Posterior vena cava (tissue), 2 donors: ENCODE measurements at regions of chr12 and their contacts with region 1.

Region 1: GRCh38 chr12:99767809-99768208 is 120.3 kb downstream of the GARIN6 start:
- DNase-seq: no peak

Region 2: GRCh38 chr12:99043319-99043914 is 724.4 kb before region 1 on chr12:
- intact Hi-C with region 1: loop called (anchors 10 kb)
- DNase-seq: peak; percentile 85

Region 3: DNA sequence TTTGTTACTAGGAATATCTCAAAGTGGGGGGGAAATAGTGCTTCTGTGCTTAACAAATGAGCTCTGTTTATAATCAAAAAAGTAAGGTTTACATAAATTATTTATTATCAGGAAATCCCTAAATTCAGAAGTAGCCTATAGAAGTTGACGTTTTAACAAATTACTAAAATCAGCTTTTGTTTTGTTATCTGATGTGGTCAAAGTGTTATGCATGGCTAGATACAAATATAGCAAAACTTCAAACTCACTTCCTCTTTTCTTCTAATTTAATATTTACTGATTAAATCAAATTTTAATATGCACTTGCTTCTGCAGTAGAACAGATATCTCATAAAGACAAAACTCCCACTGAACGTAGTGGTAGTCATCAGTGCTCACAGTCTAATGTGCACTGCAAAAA is 72.8 kb before region 1 on chr12:
- intact Hi-C with region 1: no loop called
- DNase-seq: no peak

Region 4: DNA sequence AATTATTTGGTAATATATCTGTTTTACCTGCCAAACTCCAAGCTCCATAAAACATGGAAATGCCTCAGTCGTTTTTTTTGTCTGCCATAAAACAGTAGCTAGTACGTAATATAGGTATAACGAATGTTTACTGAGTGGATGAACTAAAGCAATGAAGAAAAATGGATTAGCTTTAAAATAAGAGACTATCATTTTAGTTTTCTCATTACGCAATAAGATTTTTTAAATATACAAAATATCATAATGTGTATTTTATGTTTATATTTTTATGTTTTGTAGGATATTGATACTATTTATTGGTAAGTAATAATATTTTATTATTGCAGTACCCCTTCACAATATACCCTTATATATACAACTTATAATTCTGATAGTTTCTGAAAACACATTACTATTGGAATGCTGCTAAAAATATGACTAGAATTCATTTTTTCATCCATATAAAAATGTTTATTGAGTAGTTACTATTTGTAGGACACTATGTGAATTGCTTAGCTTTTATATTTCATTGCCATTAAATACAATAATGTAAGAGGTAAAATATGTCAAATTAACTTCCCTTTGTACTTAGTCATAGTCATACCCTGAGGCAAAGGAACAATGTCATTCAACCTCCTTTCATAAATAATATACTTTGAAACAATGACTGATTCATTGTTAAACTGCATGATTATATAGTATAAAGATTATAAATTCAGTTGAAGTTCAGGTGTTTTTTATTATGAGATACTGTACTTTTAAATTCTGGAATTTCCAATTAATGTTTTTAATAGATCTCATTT is 15.3 kb before region 1 on chr12:
- intact Hi-C with region 1: no loop called
- DNase-seq: no peak